Heart right ventricle (tissue), 16 donors: ENCODE measurements at regions of chr9 and their contacts with region 1.

Region 1: GRCh38 chr9:107919263-107919662 is 429.7 kb upstream of the KLF4 start:
- DNase-seq: no peak
- ATAC-seq: peak in 2 of 8 donors; percentile 11 to 27
- H3K4me3 ChIP-seq: no peak overlapping the region
- H3K27ac ChIP-seq: no peak overlapping the region
- H3K4me1 ChIP-seq: no peaks in the 10 kb centered on the region
- H3K27me3 ChIP-seq: no peaks in the 10 kb centered on the region
- CTCF ChIP-seq: no peak

Region 2: GRCh38 chr9:107890921-107891465 is 28.3 kb before region 1 on chr9:
- intact Hi-C with region 1: loop called in 1 of 10 experiments (anchors 2 kb)
- DNase-seq: no peak
- ATAC-seq: no peak
- H3K4me3 ChIP-seq: no peak overlapping the region
- H3K27ac ChIP-seq: no peak overlapping the region
- H3K4me1 ChIP-seq: peaks cover 0 to 5% (median 0%) of the 10 kb centered on the region in 9 donors
- H3K27me3 ChIP-seq: no peaks in the 10 kb centered on the region
- CTCF ChIP-seq: no peak

Region 3: GRCh38 chr9:107976765-107977164 is 57.5 kb after region 1 on chr9:
- intact Hi-C with region 1: loop called in 1 of 10 experiments (anchors 10 kb)
- DNase-seq: peak; percentile 28 to 50
- ATAC-seq: peak; percentile 47 to 99 (median 90)
- H3K4me3 ChIP-seq: no peak overlapping the region
- H3K27ac ChIP-seq: peak overlapping the region in 1 of 10 donors; percentile 33
- H3K4me1 ChIP-seq: peaks cover 0 to 11% (median 0%) of the 10 kb centered on the region in 9 donors
- H3K27me3 ChIP-seq: no peaks in the 10 kb centered on the region
- CTCF ChIP-seq: no peak